ENCODE measurements at regions of chr2 and their contacts with region 1.

Region 1: GRCh38 chr2:39919511-39920306 is 140.7 kb upstream of the THUMPD2 start:
- DNase-seq: peak; percentile 76
- H3K4me3 Mint-ChIP-seq: peak overlapping the region; percentile 86
- H3K27ac Mint-ChIP-seq: peak overlapping the region; percentile 90
- H3K4me1 Mint-ChIP-seq: peaks cover 63% of the 10 kb centered on the region
- H3K27me3 Mint-ChIP-seq: no peaks in the 10 kb centered on the region

Region 2: GRCh38 chr2:38128653-38129052 is 1791.1 kb before region 1 on chr2:
- intact Hi-C with region 1: no loop called
- DNase-seq: no peak
- H3K4me3 Mint-ChIP-seq: no peak overlapping the region
- H3K27ac Mint-ChIP-seq: no peak overlapping the region
- H3K4me1 Mint-ChIP-seq: no peaks in the 10 kb centered on the region
- H3K27me3 Mint-ChIP-seq: no peaks in the 10 kb centered on the region

Region 3: GRCh38 chr2:39381653-39382052 is 538.1 kb before region 1 on chr2:
- intact Hi-C with region 1: no loop called
- DNase-seq: no peak
- H3K4me3 Mint-ChIP-seq: no peak overlapping the region
- H3K27ac Mint-ChIP-seq: no peak overlapping the region
- H3K4me1 Mint-ChIP-seq: peaks cover 24% of the 10 kb centered on the region
- H3K27me3 Mint-ChIP-seq: no peaks in the 10 kb centered on the region

Region 4: DNA sequence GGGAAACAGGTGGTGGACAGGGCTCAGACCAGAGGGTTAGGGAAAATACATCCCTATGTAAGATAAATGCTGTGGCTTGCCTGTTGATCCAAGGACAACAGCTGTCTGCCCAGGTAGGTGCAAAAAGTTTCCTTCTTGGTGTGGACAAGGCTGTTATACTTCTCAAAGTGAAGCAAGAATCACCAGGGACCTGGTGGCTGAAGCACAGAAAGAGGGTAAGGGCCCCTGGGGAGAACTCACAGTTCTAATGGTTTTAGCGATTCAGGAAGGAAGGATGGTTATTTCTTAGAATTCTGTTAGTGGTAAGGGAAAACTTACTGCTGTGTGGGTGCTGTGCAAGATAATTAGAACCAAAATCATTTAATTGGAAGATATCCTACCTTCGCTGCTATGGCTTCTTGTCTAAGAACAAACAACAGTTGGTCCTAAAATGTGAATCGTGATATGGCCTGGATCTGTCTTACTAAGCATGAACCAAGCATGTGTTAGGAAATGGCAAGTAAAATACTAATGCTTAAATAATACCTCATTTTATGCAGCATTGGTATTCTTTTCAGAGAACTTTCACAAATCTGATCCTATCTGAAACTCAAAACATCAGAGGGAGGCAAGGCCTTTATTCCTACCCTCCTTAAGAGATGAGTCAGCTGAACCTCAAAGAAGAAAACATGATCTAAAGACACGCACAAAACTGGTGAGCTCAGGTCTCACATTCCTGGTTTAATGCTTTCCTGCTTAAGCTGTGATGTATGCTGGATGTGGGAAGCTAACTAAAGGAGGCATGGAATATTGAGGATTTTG is 18.5 kb after region 1 on chr2:
- intact Hi-C with region 1: loop called (anchors 1 kb)
- DNase-seq: peak; percentile 63
- H3K4me3 Mint-ChIP-seq: peak overlapping the region; percentile 67
- H3K27ac Mint-ChIP-seq: peak overlapping the region; percentile 93
- H3K4me1 Mint-ChIP-seq: peaks cover 44% of the 10 kb centered on the region
- H3K27me3 Mint-ChIP-seq: no peaks in the 10 kb centered on the region

Region 5: GRCh38 chr2:39948016-39948719 is 28.5 kb after region 1 on chr2:
- intact Hi-C with region 1: loop called (anchors 1 kb)
- DNase-seq: no peak
- H3K4me3 Mint-ChIP-seq: peak overlapping the region; percentile 32
- H3K27ac Mint-ChIP-seq: peak overlapping the region; percentile 92
- H3K4me1 Mint-ChIP-seq: peaks cover 35% of the 10 kb centered on the region
- H3K27me3 Mint-ChIP-seq: no peaks in the 10 kb centered on the region

Region 6: GRCh38 chr2:39996653-39997080 is 77.0 kb after region 1 on chr2:
- intact Hi-C with region 1: loop called (anchors 1 kb)
- DNase-seq: no peak
- H3K4me3 Mint-ChIP-seq: no peak overlapping the region
- H3K27ac Mint-ChIP-seq: peak overlapping the region; percentile 79
- H3K4me1 Mint-ChIP-seq: peaks cover 21% of the 10 kb centered on the region
- H3K27me3 Mint-ChIP-seq: no peaks in the 10 kb centered on the region

Region 7: DNA sequence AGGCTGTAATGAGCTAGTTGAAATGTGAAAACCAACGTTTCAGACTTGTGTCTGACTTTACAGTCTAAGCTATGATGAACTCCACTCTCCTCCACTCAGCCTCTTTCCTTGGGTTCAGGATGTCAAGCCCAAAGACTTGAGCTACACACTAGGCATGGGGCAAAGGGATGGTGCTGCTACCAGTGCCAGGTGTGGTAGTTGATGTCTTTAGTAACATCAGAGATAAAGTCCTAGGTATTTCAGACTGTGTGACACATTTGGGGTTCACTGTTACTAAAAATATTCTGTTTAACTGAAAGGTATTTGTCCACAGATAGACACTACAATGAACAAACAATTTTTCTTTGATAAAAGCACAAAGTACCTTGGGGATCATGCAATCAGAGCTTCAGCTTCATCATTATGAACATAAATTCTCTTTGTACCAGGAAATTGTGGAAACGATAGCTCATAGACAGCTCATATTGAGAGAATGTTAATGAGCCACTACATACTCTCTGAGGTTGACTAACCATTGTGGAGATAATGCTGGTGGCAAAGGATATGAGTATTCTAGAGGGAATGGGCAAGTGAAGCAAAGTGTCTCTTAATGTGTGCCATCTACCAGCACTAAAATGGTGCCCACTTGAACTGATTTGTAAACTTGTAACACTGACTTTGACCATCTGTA is 113.1 kb after region 1 on chr2:
- intact Hi-C with region 1: loop called (anchors 2 kb)
- DNase-seq: no peak
- H3K4me3 Mint-ChIP-seq: no peak overlapping the region
- H3K27ac Mint-ChIP-seq: peak overlapping the region; percentile 64
- H3K4me1 Mint-ChIP-seq: peaks cover 17% of the 10 kb centered on the region
- H3K27me3 Mint-ChIP-seq: no peaks in the 10 kb centered on the region

Region 8: DNA sequence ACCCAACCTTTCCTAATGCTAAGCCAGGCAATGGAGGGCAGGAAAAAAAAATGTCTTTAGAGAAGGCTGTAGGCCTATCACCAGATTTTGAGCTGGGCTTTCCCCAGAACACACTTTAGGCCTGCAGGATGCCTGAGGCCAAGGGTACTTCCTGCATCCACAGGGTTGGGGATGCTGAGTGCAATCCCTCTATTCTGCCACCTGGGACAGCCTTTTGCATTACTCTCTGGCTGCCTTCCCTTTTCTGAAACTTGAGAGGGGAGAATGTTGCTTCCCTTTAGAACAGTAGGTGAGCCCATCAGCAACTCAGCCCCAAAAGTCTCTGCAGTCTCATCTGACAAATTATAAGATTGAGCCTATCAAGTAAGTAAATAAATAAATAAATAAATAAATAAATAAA is 336.9 kb after region 1 on chr2:
- intact Hi-C with region 1: no loop called
- DNase-seq: no peak
- H3K4me3 Mint-ChIP-seq: no peak overlapping the region
- H3K27ac Mint-ChIP-seq: no peak overlapping the region
- H3K4me1 Mint-ChIP-seq: peaks cover 2% of the 10 kb centered on the region
- H3K27me3 Mint-ChIP-seq: no peaks in the 10 kb centered on the region

Region 9: DNA sequence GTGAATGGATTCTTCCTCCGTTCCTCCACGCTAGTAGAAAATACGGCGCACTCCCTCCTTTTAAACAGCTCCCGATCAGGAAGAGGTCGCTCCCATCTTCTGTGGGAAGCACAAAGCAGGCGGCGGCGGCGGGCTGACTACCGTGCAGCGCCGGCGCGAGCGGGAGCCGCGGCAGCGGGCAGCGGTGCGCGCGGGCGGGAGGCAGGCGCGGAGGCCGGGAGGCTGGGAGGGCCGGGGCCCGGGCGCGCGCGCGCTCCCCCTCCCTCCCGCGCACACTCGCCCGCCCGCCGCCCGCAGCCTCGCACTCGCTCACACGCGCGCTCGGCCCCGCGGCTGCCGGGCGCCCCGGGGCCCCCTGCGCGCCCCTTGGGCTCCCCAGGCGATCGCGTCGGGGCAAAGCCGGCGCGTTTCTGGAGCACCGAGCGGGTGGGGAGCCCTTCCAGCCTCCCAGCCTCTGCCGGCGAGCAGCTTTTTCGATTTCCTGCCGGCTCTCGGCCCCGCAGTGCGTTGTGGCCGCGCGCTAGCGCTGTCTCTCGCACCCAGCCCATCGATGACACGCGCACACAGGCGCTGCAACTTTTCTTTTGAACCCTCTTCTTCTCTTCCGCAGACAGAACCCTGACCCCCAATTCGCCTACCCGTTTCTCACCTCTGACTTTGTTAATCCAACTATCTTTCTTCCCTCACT is 532.4 kb after region 1 on chr2 and contains the start of gene SLC8A1:
- intact Hi-C with region 1: loop called (anchors 2 kb)
- DNase-seq: peak; percentile 72
- H3K4me3 Mint-ChIP-seq: peak within 1 kb of the TSS; percentile 82
- H3K27ac Mint-ChIP-seq: peak within 1 kb of the TSS; percentile 80
- H3K4me1 Mint-ChIP-seq: peaks cover 22% of the 10 kb centered on the region
- H3K27me3 Mint-ChIP-seq: peaks cover 51% of the 10 kb centered on the region
- total RNA-seq, gene SLC8A1: 3.4 and 5.0 TPM in 2 replicates

Measured in activated CD4-positive, alpha-beta T cell treated with anti-CD3 and anti-CD28 coated beads, Interleukin-2, amount 10 ng/mL, durations not matched to agents 24 days and 14 days (primary cell).